Activated naive CD8-positive, alpha-beta T cell treated with anti-CD3 and anti-CD28 coated beads, Interleukin-2, amount 10 ng/mL, durations not matched to agents 7 days and 5 days (primary cell): ENCODE measurements at regions of chr17 and their contacts with region 1.

Region 1: DNA sequence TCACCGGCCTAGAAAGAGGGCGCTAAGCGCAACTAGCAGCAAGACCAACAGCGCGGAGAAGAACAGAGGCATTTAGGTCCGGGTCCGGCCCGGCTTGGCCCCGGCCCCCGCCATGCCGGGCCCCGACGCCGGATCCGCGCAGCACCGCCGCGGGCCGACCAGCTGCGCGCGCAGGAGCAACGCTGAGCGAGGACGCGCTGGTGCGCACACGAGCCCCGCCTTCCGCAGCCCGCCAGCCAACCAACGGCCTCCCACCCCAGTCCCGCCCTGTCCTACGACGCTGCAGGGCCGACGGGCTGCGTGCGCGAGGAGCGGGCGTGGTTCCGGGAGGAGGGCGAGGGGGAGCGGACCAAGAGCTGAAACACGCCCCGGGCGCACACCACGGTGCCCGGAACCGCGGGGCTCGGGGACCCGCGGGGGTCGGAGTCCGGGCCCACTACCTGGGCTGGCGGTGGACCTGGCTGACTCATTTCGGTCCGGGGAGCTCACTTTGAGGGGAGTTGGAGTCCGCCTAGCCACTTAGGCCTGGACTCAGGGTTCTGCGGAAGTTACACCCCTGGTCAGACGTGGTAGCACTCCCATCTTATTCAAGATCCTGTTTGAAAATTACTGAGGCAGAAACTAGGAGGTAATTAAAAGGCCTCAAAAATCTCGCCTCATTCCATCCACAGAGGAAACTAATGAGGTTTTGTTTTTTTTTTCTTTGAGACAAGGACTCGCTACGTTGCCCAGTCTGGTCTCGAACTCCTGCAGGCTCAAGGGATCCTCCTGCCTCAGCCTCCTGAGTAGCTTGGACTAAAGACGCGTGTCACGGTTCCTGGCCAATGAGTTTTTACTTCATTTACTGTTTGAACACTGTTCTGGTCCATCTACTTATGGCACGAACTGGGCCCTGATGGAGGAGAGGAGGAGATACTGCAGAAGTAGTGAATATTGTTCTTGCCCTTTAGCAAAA is at the start of gene BLTP2:
- DNase-seq: peak; percentile 94
- ATAC-seq: peak; percentile 98
- H3K4me3 Mint-ChIP-seq: peak within 1 kb of the TSS; percentile 97
- H3K27ac Mint-ChIP-seq: peak within 1 kb of the TSS; percentile 91
- H3K4me1 Mint-ChIP-seq: peaks cover 30% of the 10 kb centered on the region
- H3K27me3 Mint-ChIP-seq: no peaks in the 10 kb centered on the region
- total RNA-seq, gene BLTP2: 144 to 157 TPM

Region 2: GRCh38 chr17:28571255-28572122 is 73.8 kb before region 1 on chr17 and contains the start of gene PIGS:
- POLR2A ChIA-PET with region 1: interaction called, 18 read pairs
- DNase-seq: peak; percentile 92
- ATAC-seq: peak; percentile 99
- H3K4me3 Mint-ChIP-seq: peak within 1 kb of the TSS; percentile 95
- H3K27ac Mint-ChIP-seq: peak within 1 kb of the TSS; percentile 94
- H3K4me1 Mint-ChIP-seq: peaks cover 42% of the 10 kb centered on the region
- H3K27me3 Mint-ChIP-seq: no peaks in the 10 kb centered on the region
- total RNA-seq, gene PIGS: 60.5 to 63.1 TPM

Region 3: GRCh38 chr17:28576758-28577465 is 68.3 kb before region 1 on chr17 and contains the start of gene ALDOC:
- POLR2A ChIA-PET with region 1: interaction called, 18 read pairs
- DNase-seq: peak; percentile 99
- ATAC-seq: peak; percentile 88
- H3K4me3 Mint-ChIP-seq: peak within 1 kb of the TSS; percentile 92
- H3K27ac Mint-ChIP-seq: peak within 1 kb of the TSS; percentile 89
- H3K4me1 Mint-ChIP-seq: peaks cover 20% of the 10 kb centered on the region
- H3K27me3 Mint-ChIP-seq: no peaks in the 10 kb centered on the region
- total RNA-seq, gene ALDOC: 142 to 154 TPM

Region 4: DNA sequence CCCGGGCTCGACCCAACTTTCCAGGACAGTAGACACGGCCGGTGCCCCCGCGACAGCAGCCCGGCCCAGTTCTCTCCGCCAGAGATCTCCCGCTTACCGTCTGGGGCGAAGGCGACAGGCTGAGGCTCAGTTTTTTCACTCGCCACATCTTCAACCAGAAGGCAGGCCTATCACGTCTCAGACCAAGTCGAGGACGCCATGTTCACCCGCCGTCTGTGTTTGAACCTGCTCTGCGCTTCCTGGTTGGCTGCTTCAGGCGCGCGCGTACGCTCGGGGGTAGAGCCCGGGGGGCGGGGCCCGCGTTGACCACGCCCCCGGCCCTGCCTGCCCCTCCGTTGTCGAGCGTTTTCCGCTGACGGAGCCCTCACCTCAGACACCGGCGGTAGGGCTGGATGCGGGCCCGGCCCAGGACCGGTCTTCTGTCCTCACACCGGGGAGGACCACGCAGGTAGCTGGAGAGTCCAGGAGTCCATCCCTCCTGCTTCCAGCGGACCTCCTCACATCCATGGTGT is 46.4 kb before region 1 on chr17 and contains the start of gene SPAG5:
- POLR2A ChIA-PET with region 1: interaction called, 11 read pairs
- DNase-seq: peak; percentile 98
- ATAC-seq: peak; percentile 92
- H3K4me3 Mint-ChIP-seq: peak within 1 kb of the TSS; percentile 90
- H3K27ac Mint-ChIP-seq: peak within 1 kb of the TSS; percentile 93
- H3K4me1 Mint-ChIP-seq: peaks cover 16% of the 10 kb centered on the region
- H3K27me3 Mint-ChIP-seq: no peaks in the 10 kb centered on the region
- total RNA-seq, gene SPAG5: 109 to 118 TPM

Region 5: GRCh38 chr17:28661635-28662537 is 16.6 kb after region 1 on chr17 and contains the starts of genes SDF2 and SUPT6H:
- POLR2A ChIA-PET with region 1: interaction called, 74 read pairs
- DNase-seq: peak; percentile 94
- ATAC-seq: peak; percentile 86
- H3K4me3 Mint-ChIP-seq: peak within 1 kb of the TSS; percentile 99
- H3K27ac Mint-ChIP-seq: peak within 1 kb of the TSS; percentile 96
- H3K4me1 Mint-ChIP-seq: peaks cover 30% of the 10 kb centered on the region
- H3K27me3 Mint-ChIP-seq: no peaks in the 10 kb centered on the region
- total RNA-seq, gene SDF2: 47.3 to 50.1 TPM
- total RNA-seq, gene SUPT6H: 81.4 to 87.1 TPM

Region 6: DNA sequence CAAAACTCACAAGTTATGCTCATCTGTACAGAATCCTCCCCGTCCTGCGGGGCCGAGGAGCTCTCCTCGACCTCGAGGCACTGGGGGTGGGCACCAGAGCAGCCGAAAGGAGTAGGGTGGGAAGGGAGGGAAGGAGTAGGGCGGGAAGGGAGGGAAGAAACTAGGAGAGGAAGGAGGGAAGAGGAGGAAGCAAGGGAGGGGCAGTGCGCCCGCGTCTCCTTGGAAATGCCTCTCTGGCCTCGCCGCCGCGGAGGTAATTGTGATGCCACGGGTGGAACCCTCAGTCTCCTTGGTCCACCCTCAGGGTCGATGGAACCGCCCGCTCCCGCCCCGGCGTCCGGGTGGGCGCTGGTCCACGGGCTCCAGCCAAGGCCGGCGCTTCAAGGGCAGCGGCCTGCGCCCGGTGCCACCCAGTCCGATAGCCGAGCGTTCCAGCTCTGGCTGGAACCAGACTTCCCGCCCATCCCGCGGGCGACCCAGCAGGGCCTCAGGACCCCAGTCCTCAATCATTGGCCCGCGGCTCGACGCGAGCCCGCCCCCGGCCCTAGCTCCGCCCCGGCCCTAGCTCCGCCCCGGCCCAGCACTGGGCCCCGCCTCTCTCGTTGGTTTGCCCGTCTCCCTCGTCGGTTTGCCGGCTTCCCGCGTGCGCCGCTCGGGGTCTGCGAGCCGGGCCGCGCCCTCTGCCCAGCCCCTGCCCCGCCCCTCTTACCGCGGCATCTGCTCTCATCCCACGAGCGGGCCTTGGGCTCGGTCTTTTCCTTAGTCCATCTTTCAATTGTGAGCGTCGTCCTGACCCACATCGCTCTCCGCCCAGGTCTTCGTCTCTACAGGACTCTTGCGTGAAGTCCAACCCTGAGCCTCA is 65.8 kb after region 1 on chr17:
- POLR2A ChIA-PET with region 1: interaction called, 23 read pairs
- DNase-seq: peak; percentile 96
- ATAC-seq: peak; percentile 84
- H3K4me3 Mint-ChIP-seq: peak overlapping the region; percentile 95
- H3K27ac Mint-ChIP-seq: peak overlapping the region; percentile 99
- H3K4me1 Mint-ChIP-seq: peaks cover 21% of the 10 kb centered on the region
- H3K27me3 Mint-ChIP-seq: peaks cover 17% of the 10 kb centered on the region

Region 7: DNA sequence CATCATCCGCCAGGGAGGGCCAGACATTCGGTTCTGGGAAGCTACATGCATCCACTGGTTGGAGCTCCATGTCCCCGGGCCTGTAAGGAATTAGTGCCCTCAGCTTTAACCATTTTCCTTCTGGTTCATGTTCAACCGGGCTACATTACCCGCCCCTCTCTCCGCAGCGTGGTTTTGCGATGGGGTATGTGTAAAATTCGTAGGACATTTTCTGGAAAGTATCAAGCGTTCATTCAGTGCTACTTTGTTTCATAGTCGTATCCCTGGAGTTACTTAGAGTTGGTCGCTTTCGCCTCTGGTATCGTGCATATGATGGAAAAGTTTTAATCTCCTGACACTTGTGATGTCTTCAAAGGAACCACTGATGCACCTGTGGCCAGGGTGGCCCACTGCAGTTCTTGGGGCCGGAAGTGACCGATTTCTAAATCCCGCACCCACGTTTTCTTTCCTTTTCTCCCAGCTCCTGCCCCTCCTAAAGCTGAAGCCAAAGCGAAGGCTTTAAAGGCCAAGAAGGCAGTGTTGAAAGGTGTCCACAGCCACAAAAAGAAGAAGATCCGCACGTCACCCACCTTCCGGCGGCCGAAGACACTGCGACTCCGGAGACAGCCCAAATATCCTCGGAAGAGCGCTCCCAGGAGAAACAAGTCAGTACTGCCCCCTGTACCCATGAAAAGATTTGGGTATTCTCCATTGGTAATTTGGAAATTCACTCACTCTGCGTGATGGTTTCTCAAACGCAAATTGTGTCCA is 75.2 kb after region 1 on chr17:
- POLR2A ChIA-PET with region 1: interaction called, 15 read pairs
- DNase-seq: no peak
- ATAC-seq: no peak
- H3K4me3 Mint-ChIP-seq: peak overlapping the region; percentile 95
- H3K27ac Mint-ChIP-seq: peak overlapping the region; percentile 97
- H3K4me1 Mint-ChIP-seq: peaks cover 43% of the 10 kb centered on the region
- H3K27me3 Mint-ChIP-seq: peaks cover 19% of the 10 kb centered on the region